ENCODE measurements at regions of chr9 and their contacts with region 1.

Region 1: GRCh38 chr9:34493972-34494535 is 28.7 kb downstream of the ENHO start:
- DNase-seq: peak; percentile 59
- ATAC-seq: peak; percentile 68

Region 2: DNA sequence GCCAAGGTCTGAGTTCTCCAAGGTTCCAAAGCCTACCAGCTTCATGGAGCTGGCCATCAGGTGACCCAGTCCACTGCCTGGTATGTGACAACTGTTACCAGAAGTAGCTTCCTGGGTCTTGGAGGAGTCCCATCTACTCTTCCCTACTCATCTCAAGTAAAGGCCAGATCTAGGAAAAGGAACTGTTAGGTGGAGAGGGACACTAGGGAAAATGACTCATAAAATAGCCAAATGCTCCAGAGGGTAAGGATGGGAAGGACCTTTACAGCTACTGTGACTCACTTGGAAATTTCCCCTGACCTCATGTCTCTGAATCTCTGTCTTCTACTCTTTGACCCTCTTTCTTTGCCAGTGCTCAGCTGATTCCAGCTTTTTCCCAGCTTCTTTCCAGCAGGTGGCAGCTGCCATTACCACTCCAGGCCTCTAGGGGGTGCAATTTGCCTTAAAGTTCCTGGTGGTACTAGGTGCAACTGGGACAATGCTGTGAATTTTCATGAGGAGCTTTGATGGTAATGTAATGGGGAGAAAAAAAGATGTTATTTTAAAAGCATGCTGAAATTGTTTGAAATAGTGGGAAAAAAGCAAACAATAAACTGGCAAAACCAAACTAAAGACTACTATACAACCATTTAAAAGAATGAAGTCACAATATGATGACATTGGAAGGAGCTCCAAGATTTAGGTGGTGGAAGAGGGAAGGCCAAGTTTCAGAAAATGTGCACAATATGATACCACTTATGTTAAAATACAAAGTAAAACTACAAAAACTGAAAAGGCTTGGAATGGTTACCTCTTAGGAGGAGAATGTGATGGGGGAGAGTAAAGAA is 90.3 kb before region 1 on chr9:
- intact Hi-C with region 1: loop called (anchors 10 kb)
- DNase-seq: peak; percentile 67
- ATAC-seq: peak; percentile 63

Region 3: GRCh38 chr9:34454571-34455065 is 39.4 kb before region 1 on chr9:
- intact Hi-C with region 1: no loop called
- DNase-seq: peak; percentile 46
- ATAC-seq: no peak